Posterior vena cava (tissue), 2 donors: ENCODE measurements at regions of chr10 and their contacts with region 1.

Region 1: GRCh38 chr10:14468023-14468441 is 137.3 kb upstream of the FRMD4A start:
- DNase-seq: no peak

Region 2: GRCh38 chr10:14409856-14410458 is 58.1 kb before region 1 on chr10:
- intact Hi-C with region 1: loop called in 1 of 2 experiments (anchors 1 kb)
- DNase-seq: no peak